ENCODE measurements at regions of chr17 and their contacts with region 1.

Region 1: DNA sequence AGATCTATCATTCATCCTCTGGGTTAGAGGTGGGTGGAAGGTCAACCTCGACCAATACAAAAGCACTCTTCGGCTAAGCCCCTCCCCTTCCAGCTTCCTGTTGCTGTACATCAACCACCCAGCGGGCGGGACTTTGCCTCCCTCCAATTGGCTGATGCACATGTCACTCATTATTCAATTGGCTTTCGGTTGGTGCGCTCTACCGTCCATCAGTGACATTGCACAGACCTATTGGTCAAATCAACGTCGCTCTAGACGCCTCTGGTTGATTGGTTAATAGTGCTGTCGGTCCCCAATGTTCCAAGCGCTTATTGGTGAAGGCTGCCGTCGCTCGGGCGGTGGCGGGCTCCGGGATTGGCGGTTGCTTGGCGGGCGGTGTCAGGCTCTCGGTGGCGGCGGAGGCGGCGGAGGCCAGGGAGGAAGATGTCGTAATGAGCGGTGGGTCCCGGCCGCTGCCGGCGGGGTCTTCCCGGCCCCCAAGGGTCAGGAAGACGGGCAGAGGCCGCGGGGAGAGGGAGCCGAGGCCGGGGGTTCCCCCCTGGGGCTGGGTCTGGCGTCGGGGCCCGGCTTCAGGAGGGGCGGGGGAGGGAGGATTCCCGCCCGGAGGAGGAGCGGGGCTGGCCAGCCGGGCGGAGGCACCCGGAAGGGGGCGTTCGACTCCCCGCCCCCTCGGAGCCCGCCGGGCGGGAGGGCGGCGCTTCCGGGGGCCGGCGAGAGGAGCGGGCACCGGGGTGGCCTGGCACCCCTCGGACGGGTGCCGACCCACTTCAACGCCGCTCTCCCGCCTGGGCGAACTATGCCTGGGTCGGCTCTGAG is at the start of gene SP2:
- DNase-seq: peak; percentile 99 to 100 (median 99)
- ATAC-seq: peak; percentile 95 to 97 (median 96)
- H3K4me3 ChIP-seq: peak within 1 kb of the TSS; percentile 72 to 94 (median 79)
- H3K27ac ChIP-seq: peak within 1 kb of the TSS; percentile 98 to 100 (median 99)
- H3K4me1 ChIP-seq: peaks cover 0 to 58% (median 48%) of the 10 kb centered on the region in 12 donors
- H3K27me3 ChIP-seq: no peaks in the 10 kb centered on the region
- CTCF ChIP-seq: peak in 7 of 12 donors; percentile 3 to 53 (median 30)
- POLR2A ChIP-seq: peak; percentile 73 to 90
- total RNA-seq, gene SP2: 11.1 to 21.2 (median 16.7) TPM

Region 2: DNA sequence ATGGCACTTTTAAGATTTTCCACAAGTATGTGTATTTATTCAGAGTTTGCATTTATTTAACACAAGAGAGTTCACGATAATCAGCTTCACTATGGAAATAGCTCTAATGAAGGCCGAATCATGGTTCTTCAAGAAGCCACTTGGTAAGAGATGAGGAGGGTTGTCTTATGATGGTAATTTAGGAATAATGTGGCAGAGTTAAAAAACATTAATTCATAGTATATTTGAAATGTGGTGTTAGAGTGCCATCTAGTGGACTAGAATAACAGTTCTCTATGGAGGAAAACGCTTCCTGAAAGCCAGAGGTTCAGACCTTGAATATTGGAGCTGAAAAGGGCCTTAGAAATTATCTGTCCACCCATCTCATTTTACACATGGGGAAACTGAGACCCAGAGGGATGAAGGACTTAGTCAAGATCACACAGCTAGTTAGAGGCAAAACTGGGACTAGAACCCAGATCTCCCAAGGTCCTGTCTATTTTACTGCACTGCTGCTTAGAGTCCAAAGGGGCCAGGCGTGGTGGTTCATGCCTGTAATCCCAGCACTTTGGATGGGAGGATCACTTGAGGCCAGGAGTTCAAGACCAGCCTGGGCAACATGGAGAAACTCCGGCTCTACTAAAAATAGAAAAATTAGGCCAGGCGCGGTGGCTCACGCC is 280.2 kb before region 1 on chr17:
- intact Hi-C with region 1: no loop called
- DNase-seq: no peak
- ATAC-seq: peak; percentile 36 to 58 (median 47)
- H3K4me3 ChIP-seq: no peak overlapping the region
- H3K27ac ChIP-seq: peak overlapping the region in 1 of 12 donors; percentile 19
- H3K4me1 ChIP-seq: peaks cover 0 to 24% (median 10%) of the 10 kb centered on the region in 12 donors
- H3K27me3 ChIP-seq: no peaks in the 10 kb centered on the region
- CTCF ChIP-seq: peak; percentile 66 to 86 (median 80)
- POLR2A ChIP-seq: no peak

Region 3: GRCh38 chr17:47929218-47930000 is 33.3 kb after region 1 on chr17:
- intact Hi-C with region 1: no loop called
- DNase-seq: peak in 2 of 5 donors; percentile 25 to 69
- ATAC-seq: peak; percentile 65 to 80 (median 72)
- H3K4me3 ChIP-seq: no peak overlapping the region
- H3K27ac ChIP-seq: peak overlapping the region in 10 of 12 donors; percentile 31 to 79 (median 46)
- H3K4me1 ChIP-seq: peaks cover 0 to 21% (median 2%) of the 10 kb centered on the region in 12 donors
- H3K27me3 ChIP-seq: no peaks in the 10 kb centered on the region
- CTCF ChIP-seq: no peak
- POLR2A ChIP-seq: no peak

Region 4: DNA sequence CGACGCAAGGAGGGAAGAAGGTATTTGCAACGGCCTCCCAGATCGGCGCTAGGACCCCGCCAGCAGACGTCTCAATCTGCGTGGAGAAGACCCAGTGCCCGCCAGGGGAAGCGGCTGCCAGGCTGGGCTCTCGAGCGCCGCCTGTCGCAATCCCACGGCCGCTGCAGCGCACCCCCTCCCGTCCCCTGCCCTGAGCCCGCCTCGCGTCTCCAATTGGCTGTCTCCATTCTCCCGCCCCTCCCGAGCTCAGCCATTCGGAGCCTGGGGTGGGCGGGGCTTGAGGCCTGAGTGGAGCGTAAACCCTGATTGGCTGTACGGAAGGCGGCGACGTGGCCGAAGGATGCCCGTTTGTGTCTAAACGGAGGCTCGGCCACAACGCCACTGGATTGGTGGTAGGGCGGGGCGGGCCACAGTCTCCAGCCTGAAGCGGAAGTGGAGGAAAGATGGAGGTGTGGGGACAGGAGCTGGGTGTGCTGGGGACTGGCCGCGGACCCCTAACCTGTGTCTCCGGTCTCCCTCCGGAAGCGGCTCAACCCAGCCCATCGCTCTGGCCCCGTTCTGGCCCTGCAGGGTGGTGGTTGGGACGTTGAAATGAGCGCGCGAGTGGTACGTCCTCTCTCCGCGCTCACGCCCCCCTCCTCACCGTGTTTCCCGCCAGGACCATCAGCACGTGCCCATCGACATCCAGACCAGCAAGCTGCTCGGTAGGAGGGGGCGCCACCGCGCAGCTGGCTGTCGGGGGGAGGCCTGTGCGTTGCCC is 74.8 kb after region 1 on chr17 and contains the start of gene CDK5RAP3:
- intact Hi-C with region 1: loop called in 8 of 10 experiments (anchors 1 to 5 kb)
- DNase-seq: peak; percentile 100
- ATAC-seq: peak; percentile 99 to 100 (median 100)
- H3K4me3 ChIP-seq: peak within 1 kb of the TSS; percentile 80 to 98 (median 90)
- H3K27ac ChIP-seq: peak within 1 kb of the TSS in 11 of 12 donors; percentile 31 to 90 (median 79)
- H3K4me1 ChIP-seq: peaks cover 0 to 24% (median 14%) of the 10 kb centered on the region in 12 donors
- H3K27me3 ChIP-seq: no peaks in the 10 kb centered on the region
- CTCF ChIP-seq: peak; percentile 95 to 99 (median 98)
- POLR2A ChIP-seq: peak in 1 of 2 donors; percentile 65
- total RNA-seq, gene CDK5RAP3: 41.2 to 80.9 (median 53.6) TPM

Region 5: DNA sequence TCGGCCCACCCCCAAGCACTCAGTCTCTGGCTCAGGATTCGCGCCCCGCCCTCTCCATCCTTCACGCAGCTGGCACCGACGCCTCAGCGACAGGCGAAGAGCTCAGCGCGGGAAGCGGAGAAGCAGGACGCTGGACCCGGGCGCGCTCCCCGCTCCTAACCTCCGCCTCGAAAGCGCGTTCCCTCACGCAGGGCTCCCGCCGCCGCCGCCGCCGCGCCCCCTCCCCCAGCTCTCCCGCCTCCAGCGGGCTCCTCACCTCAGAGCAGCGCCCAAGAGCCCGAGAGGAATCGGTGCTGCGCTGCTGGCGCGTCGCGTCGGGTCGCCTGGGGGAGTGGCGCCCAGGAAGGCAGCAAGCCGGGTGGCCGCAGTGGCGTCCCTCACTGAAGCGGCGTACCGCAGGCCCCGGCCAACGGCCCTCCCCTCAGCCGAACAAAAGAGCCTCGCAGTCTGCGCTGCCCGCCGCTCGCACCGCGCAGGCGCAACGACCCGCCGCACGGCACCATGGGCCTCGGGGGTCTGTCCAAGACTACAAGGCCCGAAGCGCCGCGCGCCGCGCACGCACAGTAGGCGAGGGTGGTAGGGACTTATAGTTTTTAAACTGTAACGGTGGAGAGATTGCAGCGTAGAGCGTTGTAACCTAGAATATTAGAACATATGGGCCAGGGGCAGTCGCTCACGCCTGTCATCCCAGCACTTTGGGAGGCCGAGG is 205.1 kb after region 1 on chr17 and contains the start of gene CBX1:
- intact Hi-C with region 1: no loop called
- DNase-seq: peak; percentile 94 to 98 (median 96)
- ATAC-seq: peak; percentile 97 to 99 (median 99)
- H3K4me3 ChIP-seq: peak within 1 kb of the TSS; percentile 76 to 98 (median 90)
- H3K27ac ChIP-seq: peak within 1 kb of the TSS; percentile 26 to 94 (median 90)
- H3K4me1 ChIP-seq: peaks cover 0 to 26% (median 10%) of the 10 kb centered on the region in 12 donors
- H3K27me3 ChIP-seq: no peaks in the 10 kb centered on the region
- CTCF ChIP-seq: no peak
- POLR2A ChIP-seq: peak in 1 of 2 donors; percentile 72
- total RNA-seq, gene CBX1: 28.5 to 43.8 (median 37.9) TPM